ENCODE measurements at regions of chr12 and their contacts with region 1.

Region 1: DNA sequence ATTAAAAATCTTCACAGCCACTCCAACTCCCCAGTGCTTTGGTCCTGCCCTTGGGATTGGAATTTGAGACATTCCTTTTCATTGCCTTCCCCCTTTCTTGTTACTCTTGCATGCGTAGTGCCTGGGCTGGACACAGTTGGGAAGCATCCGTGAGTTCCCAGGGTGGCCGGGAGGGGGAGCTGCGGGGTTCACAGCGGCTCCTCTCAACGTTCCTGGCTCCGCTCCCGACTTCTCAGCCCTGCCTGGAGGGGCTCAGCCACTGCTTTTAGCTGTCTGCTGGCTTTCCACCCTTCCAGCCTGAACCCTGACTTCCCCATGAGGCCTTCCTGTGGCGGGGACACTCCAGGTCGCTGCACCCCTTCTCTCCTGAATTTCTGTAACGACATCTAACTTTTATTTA is 3.2 kb downstream of the TEX52 start:
- DNase-seq: peak; percentile 68
- H3K4me3 Mint-ChIP-seq: no peak overlapping the region
- H3K27ac Mint-ChIP-seq: no peak overlapping the region
- H3K4me1 Mint-ChIP-seq: no peaks in the 10 kb centered on the region
- H3K27me3 Mint-ChIP-seq: no peaks in the 10 kb centered on the region

Region 2: GRCh38 chr12:2890388-2891239 is 37.0 kb after region 1 on chr12 and contains the start of gene TULP3:
- CTCF ChIA-PET with region 1: interaction called, 10 read pairs
- POLR2A ChIA-PET with region 1: no interaction called
- intact Hi-C with region 1: no loop called
- DNase-seq: peak; percentile 99
- H3K4me3 Mint-ChIP-seq: peak within 1 kb of the TSS; percentile 80
- H3K27ac Mint-ChIP-seq: peak within 1 kb of the TSS; percentile 86
- H3K4me1 Mint-ChIP-seq: peaks cover 32% of the 10 kb centered on the region
- H3K27me3 Mint-ChIP-seq: no peaks in the 10 kb centered on the region
- total RNA-seq, gene TULP3: 5.5 to 6.5 TPM

Region 3: DNA sequence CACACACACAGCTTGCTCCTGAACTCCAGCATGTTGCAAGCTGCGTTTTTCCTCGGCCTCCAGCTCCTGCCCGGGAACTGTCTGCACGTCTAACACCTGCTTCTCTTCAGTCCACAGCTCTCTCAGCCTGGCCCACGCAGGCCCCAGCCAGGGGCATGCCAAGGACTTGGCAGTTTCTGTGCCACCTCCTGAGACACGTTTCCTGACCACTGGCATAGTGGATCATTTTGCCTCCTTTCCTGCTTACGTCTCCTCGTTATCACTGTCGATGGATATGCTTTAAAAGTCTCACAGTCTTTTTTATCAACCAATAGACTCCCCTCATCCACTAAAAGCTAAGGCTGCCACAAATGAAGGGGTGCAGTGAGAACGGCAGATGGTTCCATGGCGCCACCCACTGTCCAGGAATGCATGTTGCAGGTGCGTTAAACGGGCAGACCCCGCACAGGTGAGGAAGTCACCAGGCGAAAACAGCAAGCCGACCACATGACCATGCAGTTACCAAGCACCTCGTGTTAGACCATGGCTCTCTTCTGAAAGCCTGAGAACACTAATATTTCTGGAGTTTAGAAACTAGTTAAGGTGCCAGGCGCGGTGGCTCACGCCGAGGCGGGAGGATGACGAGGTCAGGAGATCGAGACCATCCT is 90.9 kb after region 1 on chr12:
- CTCF ChIA-PET with region 1: interaction called, 40 read pairs
- POLR2A ChIA-PET with region 1: no interaction called
- intact Hi-C with region 1: no loop called
- DNase-seq: peak; percentile 79
- H3K4me3 Mint-ChIP-seq: peak overlapping the region; percentile 14
- H3K27ac Mint-ChIP-seq: no peak overlapping the region
- H3K4me1 Mint-ChIP-seq: no peaks in the 10 kb centered on the region
- H3K27me3 Mint-ChIP-seq: no peaks in the 10 kb centered on the region

Region 4: DNA sequence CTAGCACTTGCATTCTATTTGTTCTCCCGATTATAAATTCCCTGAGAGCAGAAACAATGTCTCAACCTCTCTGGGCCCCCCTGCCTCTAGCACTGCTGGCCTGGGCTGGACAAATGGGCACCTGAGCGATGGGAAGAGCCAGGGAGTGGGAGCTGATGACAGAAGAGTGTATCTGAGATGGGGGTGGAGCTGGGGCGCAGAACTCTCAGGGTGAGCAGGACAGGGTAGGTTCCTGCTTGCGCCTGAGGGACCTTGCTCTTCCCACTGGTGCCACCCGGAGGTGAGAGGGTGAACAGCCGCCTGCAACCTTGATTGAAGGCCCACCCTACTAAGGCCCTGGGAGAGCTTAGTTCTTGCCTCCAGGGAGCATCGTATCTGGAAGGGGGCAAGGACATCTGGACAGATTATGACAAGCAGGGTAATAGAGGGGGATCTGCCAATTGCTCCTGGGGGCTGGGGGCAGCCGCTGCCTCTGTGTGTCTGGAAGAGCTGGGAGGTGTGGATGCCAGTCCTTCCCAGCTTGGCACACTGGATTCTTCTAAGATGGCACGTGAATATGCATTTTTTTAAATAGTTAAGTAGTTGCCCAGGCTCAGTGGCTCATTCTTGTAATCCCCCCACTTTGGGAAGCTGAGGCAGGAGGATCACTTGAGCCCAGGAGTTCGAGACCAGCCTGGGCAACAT is 180.6 kb after region 1 on chr12:
- CTCF ChIA-PET with region 1: interaction called, 11 read pairs
- POLR2A ChIA-PET with region 1: no interaction called
- intact Hi-C with region 1: loop called (anchors 5 kb)
- DNase-seq: peak; percentile 63
- H3K4me3 Mint-ChIP-seq: no peak overlapping the region
- H3K27ac Mint-ChIP-seq: no peak overlapping the region
- H3K4me1 Mint-ChIP-seq: no peaks in the 10 kb centered on the region
- H3K27me3 Mint-ChIP-seq: peaks cover 3% of the 10 kb centered on the region

Region 5: GRCh38 chr12:3041558-3042164 is 188.0 kb after region 1 on chr12:
- CTCF ChIA-PET with region 1: interaction called, 5 read pairs
- POLR2A ChIA-PET with region 1: no interaction called
- intact Hi-C with region 1: loop called (anchors 2 kb)
- DNase-seq: peak; percentile 74
- H3K4me3 Mint-ChIP-seq: no peak overlapping the region
- H3K27ac Mint-ChIP-seq: no peak overlapping the region
- H3K4me1 Mint-ChIP-seq: no peaks in the 10 kb centered on the region
- H3K27me3 Mint-ChIP-seq: peaks cover 24% of the 10 kb centered on the region

Region 6: GRCh38 chr12:4037747-4038312 is 1184.2 kb after region 1 on chr12:
- CTCF ChIA-PET with region 1: no interaction called
- POLR2A ChIA-PET with region 1: no interaction called
- intact Hi-C with region 1: no loop called
- DNase-seq: no peak
- H3K4me3 Mint-ChIP-seq: no peak overlapping the region
- H3K27ac Mint-ChIP-seq: no peak overlapping the region
- H3K4me1 Mint-ChIP-seq: peaks cover 4% of the 10 kb centered on the region
- H3K27me3 Mint-ChIP-seq: no peaks in the 10 kb centered on the region

Measured in activated CD4-positive, alpha-beta memory T cell treated with anti-CD3 and anti-CD28 coated beads for 36 hours (primary cell).